MCF 10A (cell line): ENCODE measurements at regions of chr21 and their contacts with region 1.

Region 1: DNA sequence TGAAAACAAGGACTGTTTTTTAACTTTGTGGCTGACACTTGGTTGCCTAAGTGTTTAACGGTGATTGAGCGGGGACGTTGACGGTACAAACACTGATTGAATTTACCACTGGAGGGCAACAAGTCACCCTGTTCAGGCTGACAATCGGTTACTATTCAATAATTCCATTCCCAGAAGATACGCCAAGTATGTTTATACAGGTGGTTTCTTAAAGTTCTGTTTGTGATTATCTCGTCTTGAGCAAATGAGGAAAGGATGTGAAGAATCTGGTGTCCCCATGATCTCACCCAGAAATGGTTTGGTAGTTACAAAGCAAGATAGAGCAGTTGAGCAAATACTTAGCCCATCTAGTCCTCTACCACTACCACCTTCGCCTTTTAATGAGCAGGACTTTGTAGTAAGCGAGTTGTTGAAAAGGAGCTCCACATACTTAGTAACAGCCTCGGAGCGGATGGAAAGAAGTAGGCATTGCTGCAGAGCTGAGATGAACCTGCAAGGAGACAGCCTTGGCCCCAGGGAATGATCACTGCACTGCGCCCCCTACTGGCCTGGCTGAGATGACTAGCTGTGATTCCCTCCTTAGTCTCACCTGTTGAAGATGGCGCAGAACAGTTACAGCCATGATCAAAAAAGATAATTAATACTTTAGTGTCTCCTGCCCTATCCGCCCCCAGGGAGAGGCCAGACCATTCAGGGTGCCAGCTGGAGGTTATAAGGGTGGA is 36.3 kb downstream of the IFNAR1 start:
- DNase-seq: peak; percentile 81
- H3K4me3 Mint-ChIP-seq: peak overlapping the region; percentile 53
- H3K27ac Mint-ChIP-seq: peak overlapping the region; percentile 16
- H3K4me1 Mint-ChIP-seq: peaks cover 14% of the 10 kb centered on the region
- H3K27me3 Mint-ChIP-seq: no peaks in the 10 kb centered on the region
- CTCF ChIP-seq: peak; percentile 86

Region 2: GRCh38 chr21:32978341-32979270 is 382.4 kb before region 1 on chr21:
- CTCF ChIA-PET with region 1: no interaction called
- POLR2A ChIA-PET with region 1: no interaction called
- intact Hi-C with region 1: no loop called
- DNase-seq: no peak
- H3K4me3 Mint-ChIP-seq: no peak overlapping the region
- H3K27ac Mint-ChIP-seq: no peak overlapping the region
- H3K4me1 Mint-ChIP-seq: no peaks in the 10 kb centered on the region
- H3K27me3 Mint-ChIP-seq: peaks cover 83% of the 10 kb centered on the region
- CTCF ChIP-seq: no peak

Region 3: DNA sequence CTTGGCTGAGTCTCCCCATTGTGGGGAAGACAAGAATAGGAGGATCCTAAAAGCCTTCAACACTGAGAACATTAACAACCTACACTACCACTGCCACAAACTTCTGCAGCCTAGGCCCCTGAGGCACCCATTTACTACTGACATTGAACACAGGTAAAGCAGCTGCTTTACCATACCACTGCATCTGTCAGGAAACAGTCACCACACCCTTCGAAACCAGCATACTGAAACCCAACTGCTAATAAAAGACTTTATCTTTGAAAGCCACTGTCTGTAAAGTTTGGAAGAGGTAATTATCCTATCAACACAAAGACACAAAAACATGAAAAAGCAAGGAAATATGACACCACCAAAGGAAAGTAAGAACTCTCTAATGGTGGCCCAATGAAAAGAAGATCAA is 28.9 kb before region 1 on chr21:
- CTCF ChIA-PET with region 1: interaction called, 15 read pairs
- POLR2A ChIA-PET with region 1: no interaction called
- intact Hi-C with region 1: no loop called
- DNase-seq: no peak
- H3K4me3 Mint-ChIP-seq: no peak overlapping the region
- H3K27ac Mint-ChIP-seq: no peak overlapping the region
- H3K4me1 Mint-ChIP-seq: peaks cover 8% of the 10 kb centered on the region
- H3K27me3 Mint-ChIP-seq: no peaks in the 10 kb centered on the region
- CTCF ChIP-seq: no peak

Region 4: GRCh38 chr21:33374450-33375096 is 13.5 kb after region 1 on chr21:
- CTCF ChIA-PET with region 1: interaction called, 15 read pairs
- POLR2A ChIA-PET with region 1: interaction called, 31 read pairs
- intact Hi-C with region 1: no loop called
- DNase-seq: peak; percentile 72
- H3K4me3 Mint-ChIP-seq: no peak overlapping the region
- H3K27ac Mint-ChIP-seq: no peak overlapping the region
- H3K4me1 Mint-ChIP-seq: peaks cover 13% of the 10 kb centered on the region
- H3K27me3 Mint-ChIP-seq: no peaks in the 10 kb centered on the region
- CTCF ChIP-seq: peak; percentile 54

Region 5: GRCh38 chr21:33412832-33413519 is 51.9 kb after region 1 on chr21:
- CTCF ChIA-PET with region 1: interaction called, 10 read pairs
- POLR2A ChIA-PET with region 1: no interaction called
- intact Hi-C with region 1: no loop called
- DNase-seq: no peak
- H3K4me3 Mint-ChIP-seq: no peak overlapping the region
- H3K27ac Mint-ChIP-seq: no peak overlapping the region
- H3K4me1 Mint-ChIP-seq: peaks cover 15% of the 10 kb centered on the region
- H3K27me3 Mint-ChIP-seq: no peaks in the 10 kb centered on the region
- CTCF ChIP-seq: no peak

Region 6: DNA sequence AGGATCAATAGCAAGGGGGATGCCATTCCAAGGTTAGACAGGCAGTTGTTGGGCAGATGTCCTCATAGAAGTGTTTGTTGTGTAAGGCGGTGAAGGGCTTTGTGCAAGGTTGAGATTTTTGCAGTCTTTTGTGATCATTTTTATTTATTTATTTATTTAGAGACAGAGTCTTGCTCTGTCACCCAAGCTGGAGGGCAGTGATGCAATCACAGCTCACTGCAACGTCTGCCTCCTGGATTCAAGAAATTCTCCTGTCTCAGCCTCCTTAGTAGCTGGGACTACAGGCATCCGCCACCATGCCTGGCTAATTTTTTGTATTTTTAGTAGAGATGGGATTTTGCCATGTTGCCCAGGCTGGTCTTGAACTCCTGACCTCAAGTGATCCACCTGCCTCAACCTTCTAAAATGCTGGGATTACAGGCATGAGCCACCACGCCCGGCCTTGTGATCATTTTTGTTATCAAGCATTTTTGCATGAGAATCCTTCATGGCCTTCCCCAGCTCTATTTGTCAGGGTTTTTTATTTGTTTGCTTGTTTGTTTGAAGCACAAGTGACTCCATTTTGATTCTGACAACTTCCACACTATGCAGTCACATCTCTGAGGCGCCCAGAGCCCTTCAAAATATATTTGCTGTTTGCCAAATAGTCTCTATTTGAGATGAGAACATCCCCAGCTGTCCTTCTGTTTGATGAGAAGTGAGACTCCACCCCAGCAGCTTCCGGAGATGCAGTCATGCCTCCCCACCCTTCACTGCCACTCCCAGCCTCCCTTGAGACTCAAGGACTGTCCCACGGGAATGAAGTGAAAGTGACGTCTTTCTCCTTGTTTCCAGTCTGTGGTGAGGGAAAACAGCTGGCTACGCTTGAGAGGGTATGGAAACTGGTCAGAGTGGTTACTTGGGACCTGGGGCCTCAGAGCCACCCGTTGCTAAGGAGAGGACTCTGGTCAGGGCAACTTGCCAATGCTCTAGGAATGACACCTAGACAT is 80.7 kb after region 1 on chr21:
- CTCF ChIA-PET with region 1: interaction called, 37 read pairs
- POLR2A ChIA-PET with region 1: interaction called, 24 read pairs
- intact Hi-C with region 1: loop called (anchors 1 kb)
- DNase-seq: peak; percentile 92
- H3K4me3 Mint-ChIP-seq: peak overlapping the region; percentile 7
- H3K27ac Mint-ChIP-seq: peak overlapping the region; percentile 85
- H3K4me1 Mint-ChIP-seq: peaks cover 16% of the 10 kb centered on the region
- H3K27me3 Mint-ChIP-seq: no peaks in the 10 kb centered on the region
- CTCF ChIP-seq: no peak

Region 7: DNA sequence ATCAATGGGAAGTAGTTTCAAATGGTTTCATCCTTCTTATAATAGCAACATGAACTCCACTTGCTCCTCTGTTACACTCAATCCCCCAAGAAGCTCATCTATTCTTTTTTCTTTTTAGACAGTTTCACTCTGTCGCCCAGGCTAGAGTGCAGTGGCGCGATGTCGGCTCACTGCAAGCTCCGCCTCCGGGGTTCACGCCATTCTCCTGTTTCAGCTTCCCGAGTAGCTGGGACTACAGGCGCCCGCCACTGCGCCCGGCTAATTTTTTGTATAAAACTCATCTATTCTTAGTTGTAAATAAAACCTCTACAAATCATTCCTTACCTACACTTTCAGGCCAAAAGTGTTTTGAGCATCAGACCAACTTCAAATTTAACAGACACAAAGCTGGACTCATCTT is 275.7 kb after region 1 on chr21:
- CTCF ChIA-PET with region 1: no interaction called
- POLR2A ChIA-PET with region 1: no interaction called
- intact Hi-C with region 1: no loop called
- DNase-seq: no peak
- H3K4me3 Mint-ChIP-seq: no peak overlapping the region
- H3K27ac Mint-ChIP-seq: no peak overlapping the region
- H3K4me1 Mint-ChIP-seq: no peaks in the 10 kb centered on the region
- H3K27me3 Mint-ChIP-seq: no peaks in the 10 kb centered on the region
- CTCF ChIP-seq: no peak